ENCODE measurements at regions of chr17 and their contacts with region 1.

Region 1: GRCh38 chr17:76681222-76682137 is 29.3 kb downstream of the MXRA7 start:
- DNase-seq: peak; percentile 80
- CTCF ChIP-seq: peak; percentile 86

Region 2: GRCh38 chr17:76671123-76671911 is 10.2 kb before region 1 on chr17:
- CTCF ChIA-PET with region 1: interaction called, 31 read pairs
- POLR2A ChIA-PET with region 1: interaction called, 3 read pairs
- DNase-seq: peak; percentile 99
- CTCF ChIP-seq: no peak

Region 3: DNA sequence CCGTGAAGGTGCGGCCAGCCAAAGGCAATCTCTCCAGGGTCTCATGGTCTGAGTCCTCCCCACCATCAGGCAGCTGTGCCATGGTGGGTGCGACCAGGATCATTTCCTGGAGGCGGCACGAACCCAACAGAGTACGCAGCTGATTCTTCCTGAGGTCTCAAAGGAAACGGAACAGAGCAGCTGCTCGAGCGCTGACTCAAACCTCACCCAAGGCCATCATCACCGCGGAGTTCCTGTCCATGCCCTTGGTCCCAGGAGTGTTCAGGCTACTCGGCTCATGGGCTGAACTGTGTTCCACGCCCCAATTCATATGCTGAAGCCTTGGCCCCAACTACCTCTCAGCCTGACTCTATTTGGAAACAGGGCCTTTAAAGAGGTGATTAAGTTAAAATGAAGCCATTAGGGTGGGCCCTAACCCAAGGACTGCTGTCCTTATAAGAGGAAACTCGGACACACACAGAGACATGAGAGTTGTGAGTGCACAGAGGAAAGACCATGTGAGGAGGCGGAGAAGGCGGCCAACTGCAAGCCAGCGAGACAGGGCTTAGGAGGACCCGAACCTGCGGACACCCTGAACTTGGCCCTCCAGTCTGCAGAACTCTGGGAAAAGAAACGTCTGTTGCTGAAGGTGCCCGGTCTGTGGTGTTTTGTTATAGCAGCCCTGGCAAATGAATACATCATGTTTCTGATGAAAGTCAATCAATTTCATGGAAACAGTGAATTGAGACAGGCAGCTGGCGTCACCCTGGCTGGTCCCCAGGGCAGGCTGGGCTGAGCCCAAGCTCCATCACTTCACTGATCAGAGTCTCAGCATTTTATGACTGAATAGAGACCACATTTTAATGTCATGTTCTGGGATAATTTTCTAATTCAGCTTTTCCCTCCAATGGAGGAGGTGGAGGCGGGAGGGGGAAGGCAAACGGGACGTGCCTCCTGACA is 15.6 kb after region 1 on chr17:
- CTCF ChIA-PET with region 1: interaction called, 20 read pairs
- POLR2A ChIA-PET with region 1: no interaction called
- DNase-seq: peak; percentile 62
- CTCF ChIP-seq: no peak

Region 4: DNA sequence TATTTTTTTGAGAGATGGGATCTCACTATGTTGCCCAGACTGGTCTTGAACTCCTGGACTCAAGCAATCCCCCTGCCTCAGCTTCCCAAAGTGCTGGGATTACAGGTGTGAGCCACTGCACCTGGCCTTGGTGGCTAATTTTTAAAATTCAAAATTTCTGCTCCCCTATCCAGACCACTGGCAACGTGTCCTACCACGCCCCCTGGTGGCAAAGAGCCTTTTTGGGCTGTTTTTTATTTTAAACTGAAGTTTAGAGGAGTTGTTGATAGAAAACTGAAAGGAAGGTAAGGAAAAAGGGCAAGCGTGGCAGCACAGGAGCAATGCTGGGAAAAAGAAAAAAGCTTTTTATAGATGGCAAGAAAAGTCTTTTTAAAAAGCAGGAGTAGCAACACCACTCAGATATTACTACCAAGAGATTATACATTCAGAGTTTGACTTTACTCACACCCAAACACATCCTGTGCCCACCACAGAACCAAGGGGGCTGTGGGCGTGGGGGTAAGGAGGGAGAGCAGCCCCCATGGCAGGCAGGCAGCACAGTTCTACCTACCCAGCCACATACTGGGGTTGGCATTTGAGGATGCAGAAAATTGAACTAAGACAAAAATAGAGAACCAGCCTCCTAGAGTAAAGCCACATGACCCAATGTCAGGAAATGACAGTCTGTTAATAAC is 33.5 kb after region 1 on chr17:
- CTCF ChIA-PET with region 1: interaction called, 12 read pairs
- POLR2A ChIA-PET with region 1: no interaction called
- DNase-seq: peak; percentile 64
- CTCF ChIP-seq: peak; percentile 76